ENCODE measurements at regions of chr6 and their contacts with region 1.

Region 1: DNA sequence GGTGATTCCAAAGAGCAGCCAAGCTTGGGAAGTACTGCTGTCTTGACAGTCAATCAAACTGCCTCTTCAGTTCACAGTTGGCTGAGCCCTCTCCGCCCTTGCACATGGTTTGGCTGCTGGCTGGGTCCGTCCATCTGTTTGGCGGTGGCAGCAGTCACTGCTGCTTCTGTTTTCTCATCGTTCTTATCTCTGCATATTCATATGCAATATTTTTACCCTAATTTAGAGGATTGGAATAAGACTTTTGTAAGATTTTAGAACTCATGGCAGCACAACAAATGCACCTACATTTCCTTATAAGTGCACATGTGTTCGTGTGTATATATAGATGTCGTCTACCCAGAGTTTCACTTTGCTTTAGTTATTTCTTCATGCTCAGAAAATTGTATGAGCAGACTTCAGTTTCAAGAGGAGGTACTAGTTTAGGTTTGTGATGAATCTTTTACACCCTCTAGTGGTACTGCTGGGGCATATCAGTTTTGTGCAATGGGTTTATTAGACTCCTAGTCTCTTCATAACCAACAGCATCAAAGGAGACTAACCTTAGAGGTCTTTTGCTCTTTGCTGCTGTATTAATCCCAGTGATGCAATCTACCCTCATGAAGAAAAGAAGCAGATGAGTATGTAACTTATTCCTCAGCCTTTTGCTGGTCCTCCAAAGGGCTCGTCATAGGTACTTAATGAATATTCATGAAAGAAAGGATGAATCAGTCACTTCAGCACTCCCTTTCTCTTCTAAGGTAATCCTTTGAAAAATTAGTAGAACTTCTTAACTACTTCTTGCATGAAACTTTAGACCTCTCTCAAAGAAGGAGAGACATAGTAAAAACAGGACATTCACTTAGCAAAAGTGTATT is 44.3 kb downstream of the KHDC1L start:
- DNase-seq: peak in 2 of 9 experiments; percentile 49 to 61
- ATAC-seq: peak; percentile 82
- H3K4me3 ChIP-seq: no peak overlapping the region
- H3K4me3 Mint-ChIP-seq: peak overlapping the region; percentile 47
- H3K27ac ChIP-seq: no peak overlapping the region
- H3K27ac Mint-ChIP-seq: no peak overlapping the region
- H3K4me1 ChIP-seq: no peaks in the 10 kb centered on the region
- H3K4me1 Mint-ChIP-seq: peaks cover 4% of the 10 kb centered on the region
- H3K27me3 ChIP-seq: no peaks in the 10 kb centered on the region
- H3K27me3 Mint-ChIP-seq: no peaks in the 10 kb centered on the region
- CTCF ChIP-seq: peak; percentile 66

Region 2: GRCh38 chr6:71383901-71384489 is 1797.0 kb before region 1 on chr6:
- CTCF ChIA-PET with region 1: no interaction called
- POLR2A ChIA-PET with region 1: no interaction called
- intact Hi-C with region 1: loop called in 1 of 2 experiments (anchors 10 kb)
- DNase-seq: peak in 2 of 9 experiments; percentile 7 to 14
- ATAC-seq: no peak
- H3K4me3 ChIP-seq: no peak overlapping the region
- H3K4me3 Mint-ChIP-seq: no peak overlapping the region
- H3K27ac ChIP-seq: no peak overlapping the region
- H3K27ac Mint-ChIP-seq: no peak overlapping the region
- H3K4me1 ChIP-seq: no peaks in the 10 kb centered on the region
- H3K4me1 Mint-ChIP-seq: no peaks in the 10 kb centered on the region
- H3K27me3 ChIP-seq: no peaks in the 10 kb centered on the region
- H3K27me3 Mint-ChIP-seq: peaks cover 5% of the 10 kb centered on the region
- CTCF ChIP-seq: peak; percentile 43

Region 3: DNA sequence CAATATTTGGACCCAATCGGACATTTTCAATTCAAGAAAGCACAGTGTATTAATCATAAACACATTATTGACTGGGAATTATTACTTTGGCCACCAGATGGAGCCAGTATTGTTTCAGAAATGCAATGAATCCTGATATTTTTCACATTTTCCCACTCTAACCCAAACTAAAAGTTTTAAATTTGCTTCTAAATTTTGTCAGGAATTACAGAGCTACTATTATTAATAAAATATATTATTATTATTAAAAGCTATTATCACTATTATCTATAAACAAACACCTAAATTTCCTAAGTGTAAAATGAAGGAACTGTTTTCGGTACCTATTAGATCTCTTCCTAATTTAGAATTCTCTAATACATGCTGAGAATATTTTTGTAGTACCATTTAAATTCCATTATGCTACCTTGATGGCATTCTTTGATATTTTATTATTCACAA is 1647.0 kb before region 1 on chr6:
- CTCF ChIA-PET with region 1: no interaction called
- POLR2A ChIA-PET with region 1: no interaction called
- intact Hi-C with region 1: loop called in 1 of 2 experiments (anchors 5 kb)
- DNase-seq: peak in 1 of 9 experiments; percentile 5
- ATAC-seq: no peak
- H3K4me3 ChIP-seq: no peak overlapping the region
- H3K4me3 Mint-ChIP-seq: no peak overlapping the region
- H3K27ac ChIP-seq: no peak overlapping the region
- H3K27ac Mint-ChIP-seq: no peak overlapping the region
- H3K4me1 ChIP-seq: no peaks in the 10 kb centered on the region
- H3K4me1 Mint-ChIP-seq: no peaks in the 10 kb centered on the region
- H3K27me3 ChIP-seq: no peaks in the 10 kb centered on the region
- H3K27me3 Mint-ChIP-seq: no peaks in the 10 kb centered on the region
- CTCF ChIP-seq: peak; percentile 65

Region 4: DNA sequence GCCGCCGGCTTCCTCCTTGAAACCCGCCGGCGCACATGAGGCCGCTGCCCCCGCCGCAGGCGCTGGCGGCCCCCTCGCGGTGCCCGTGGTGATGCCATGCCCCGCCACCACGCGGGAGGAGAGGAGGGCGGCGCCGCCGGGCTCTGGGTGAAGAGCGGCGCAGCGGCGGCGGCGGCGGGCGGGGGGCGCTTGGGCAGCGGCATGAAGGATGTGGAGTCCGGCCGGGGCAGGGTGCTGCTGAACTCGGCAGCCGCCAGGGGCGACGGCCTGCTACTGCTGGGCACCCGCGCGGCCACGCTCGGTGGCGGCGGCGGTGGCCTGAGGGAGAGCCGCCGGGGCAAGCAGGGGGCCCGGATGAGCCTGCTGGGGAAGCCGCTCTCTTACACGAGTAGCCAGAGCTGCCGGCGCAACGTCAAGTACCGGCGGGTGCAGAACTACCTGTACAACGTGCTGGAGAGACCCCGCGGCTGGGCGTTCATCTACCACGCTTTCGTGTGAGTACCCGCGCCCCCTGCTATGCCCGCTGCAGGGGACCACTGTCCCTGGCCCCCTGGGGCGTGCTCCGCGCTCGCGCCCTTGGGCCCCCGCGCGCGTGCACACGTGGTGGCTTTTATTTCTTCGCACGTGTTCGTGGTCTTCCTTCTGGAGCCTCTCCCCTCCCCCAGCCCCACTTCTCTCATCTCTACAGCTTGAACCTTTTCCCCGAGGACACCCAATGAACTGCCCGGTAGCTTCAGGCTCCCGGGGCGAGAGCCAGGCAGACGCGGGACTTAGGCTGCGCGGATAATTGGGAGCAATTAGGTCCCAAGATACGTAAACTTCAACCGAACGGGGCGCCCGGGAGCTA is 558.7 kb before region 1 on chr6:
- CTCF ChIA-PET with region 1: no interaction called
- POLR2A ChIA-PET with region 1: no interaction called
- intact Hi-C with region 1: loop called (anchors 2 to 5 kb)
- DNase-seq: peak; percentile 34 to 82 (median 59)
- ATAC-seq: peak; percentile 42
- H3K4me3 ChIP-seq: peak overlapping the region; percentile 79 to 80
- H3K4me3 Mint-ChIP-seq: peak overlapping the region; percentile 96
- H3K27ac ChIP-seq: peak overlapping the region in 1 of 2 experiments; percentile 17
- H3K27ac Mint-ChIP-seq: peak overlapping the region; percentile 19
- H3K4me1 ChIP-seq: peaks cover 21% of the 10 kb centered on the region
- H3K4me1 Mint-ChIP-seq: peaks cover 57% of the 10 kb centered on the region
- H3K27me3 ChIP-seq: no peaks in the 10 kb centered on the region
- H3K27me3 Mint-ChIP-seq: no peaks in the 10 kb centered on the region
- CTCF ChIP-seq: peak; percentile 15

Measured in CD8-positive, alpha-beta T cell (primary cell).